ENCODE measurements at regions of chr2 and their contacts with region 1.

Region 1: DNA sequence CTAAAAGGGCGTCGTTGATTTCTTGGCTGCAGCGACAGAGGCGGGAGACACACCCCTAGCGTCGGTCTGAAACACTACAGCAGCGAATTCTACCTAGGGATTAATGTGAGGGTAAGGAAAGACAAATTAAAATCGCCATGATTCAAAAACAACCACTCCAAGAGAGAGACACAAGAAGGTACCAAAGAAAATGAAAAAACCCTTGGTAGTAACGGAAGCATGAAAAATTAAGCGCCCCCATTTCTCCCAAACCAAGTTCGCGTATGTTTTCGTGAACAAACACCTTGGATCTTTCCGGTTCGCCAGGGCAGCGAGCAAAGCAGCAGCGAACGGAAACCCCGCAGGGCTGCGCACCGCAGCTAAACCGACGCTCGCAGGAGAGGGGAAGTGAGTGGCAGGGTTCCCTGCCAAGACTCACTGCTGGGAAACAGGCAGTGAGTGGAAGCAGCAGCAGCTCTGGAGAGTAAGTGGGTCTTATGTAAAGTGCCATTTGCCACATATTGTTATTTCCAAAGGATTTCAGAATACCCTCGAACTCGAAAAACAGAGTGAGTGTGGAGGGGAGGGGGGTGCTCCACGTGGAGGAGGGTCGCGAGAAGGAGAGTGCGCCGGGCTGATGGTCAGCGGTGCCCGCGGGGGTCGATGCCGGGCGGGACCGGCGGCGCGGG is 1.0 kb downstream of the PPP3R1 start:
- DNase-seq: peak; percentile 87
- H3K4me3 Mint-ChIP-seq: peak overlapping the region; percentile 99
- H3K27ac Mint-ChIP-seq: peak overlapping the region; percentile 96
- H3K4me1 Mint-ChIP-seq: peaks cover 18% of the 10 kb centered on the region
- H3K27me3 Mint-ChIP-seq: no peaks in the 10 kb centered on the region
- CTCF ChIP-seq: peak; percentile 45

Region 2: GRCh38 chr2:67561457-67561965 is 689.8 kb before region 1 on chr2:
- CTCF ChIA-PET with region 1: no interaction called
- POLR2A ChIA-PET with region 1: no interaction called
- intact Hi-C with region 1: loop called (anchors 10 kb)
- DNase-seq: peak; percentile 84
- H3K4me3 Mint-ChIP-seq: peak overlapping the region; percentile 46
- H3K27ac Mint-ChIP-seq: peak overlapping the region; percentile 97
- H3K4me1 Mint-ChIP-seq: peaks cover 39% of the 10 kb centered on the region
- H3K27me3 Mint-ChIP-seq: no peaks in the 10 kb centered on the region
- CTCF ChIP-seq: no peak

Region 3: GRCh38 chr2:68176657-68177056 is 74.7 kb before region 1 on chr2:
- CTCF ChIA-PET with region 1: interaction called, 3 read pairs
- POLR2A ChIA-PET with region 1: interaction called, 10 read pairs
- intact Hi-C with region 1: loop called (anchors 5 kb)
- DNase-seq: no peak
- H3K4me3 Mint-ChIP-seq: no peak overlapping the region
- H3K27ac Mint-ChIP-seq: no peak overlapping the region
- H3K4me1 Mint-ChIP-seq: peaks cover 6% of the 10 kb centered on the region
- H3K27me3 Mint-ChIP-seq: no peaks in the 10 kb centered on the region
- CTCF ChIP-seq: no peak

Region 4: GRCh38 chr2:68190991-68191731 is 60.2 kb before region 1 on chr2:
- CTCF ChIA-PET with region 1: interaction called, 3 read pairs
- POLR2A ChIA-PET with region 1: interaction called, 54 read pairs
- intact Hi-C with region 1: loop called (anchors 2 kb)
- DNase-seq: peak; percentile 82
- H3K4me3 Mint-ChIP-seq: no peak overlapping the region
- H3K27ac Mint-ChIP-seq: peak overlapping the region; percentile 81
- H3K4me1 Mint-ChIP-seq: peaks cover 43% of the 10 kb centered on the region
- H3K27me3 Mint-ChIP-seq: no peaks in the 10 kb centered on the region
- CTCF ChIP-seq: no peak

Region 5: DNA sequence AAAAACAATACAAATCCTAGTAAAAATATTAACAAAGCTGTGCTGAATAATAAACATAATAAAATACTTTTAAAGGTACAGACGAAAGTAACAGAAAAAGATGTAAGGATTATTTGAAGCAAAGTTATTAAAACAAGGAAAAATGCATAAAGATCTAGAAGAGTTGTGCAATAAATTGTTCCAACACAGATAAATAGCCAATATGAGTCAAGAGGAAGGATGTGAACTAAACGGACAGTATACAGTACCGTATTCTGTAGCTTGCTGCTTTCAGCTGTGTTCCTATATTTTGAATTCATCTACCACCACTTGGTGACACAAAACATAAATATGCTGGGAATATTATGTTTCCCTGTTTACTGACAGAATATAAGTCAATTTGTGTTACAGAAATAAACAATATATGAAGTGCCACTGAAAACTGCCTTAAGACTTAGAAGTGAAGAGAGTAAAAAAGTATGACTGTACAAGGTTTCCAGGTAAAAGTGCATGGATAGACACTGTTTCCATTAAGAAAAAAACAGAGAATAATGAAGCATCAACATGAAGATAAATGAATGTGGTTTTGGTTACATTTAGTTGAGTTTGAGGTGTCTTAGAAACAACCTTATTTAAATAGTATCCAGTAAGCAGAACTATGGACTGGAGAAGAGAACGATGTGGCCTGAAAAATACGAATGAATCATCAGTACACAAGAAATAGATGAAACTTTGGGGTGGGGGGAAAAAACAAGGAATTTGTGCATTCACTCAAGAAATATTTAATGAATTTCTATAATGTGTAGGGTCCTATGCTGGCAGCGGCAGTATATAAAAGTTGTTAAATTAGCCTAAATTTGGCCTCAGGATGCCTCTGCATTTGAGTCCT is 12.1 kb before region 1 on chr2:
- CTCF ChIA-PET with region 1: interaction called, 3 read pairs
- POLR2A ChIA-PET with region 1: interaction called, 50 read pairs
- intact Hi-C with region 1: no loop called
- DNase-seq: peak; percentile 30
- H3K4me3 Mint-ChIP-seq: peak overlapping the region; percentile 54
- H3K27ac Mint-ChIP-seq: peak overlapping the region; percentile 88
- H3K4me1 Mint-ChIP-seq: peaks cover 38% of the 10 kb centered on the region
- H3K27me3 Mint-ChIP-seq: no peaks in the 10 kb centered on the region
- CTCF ChIP-seq: no peak

Region 6: DNA sequence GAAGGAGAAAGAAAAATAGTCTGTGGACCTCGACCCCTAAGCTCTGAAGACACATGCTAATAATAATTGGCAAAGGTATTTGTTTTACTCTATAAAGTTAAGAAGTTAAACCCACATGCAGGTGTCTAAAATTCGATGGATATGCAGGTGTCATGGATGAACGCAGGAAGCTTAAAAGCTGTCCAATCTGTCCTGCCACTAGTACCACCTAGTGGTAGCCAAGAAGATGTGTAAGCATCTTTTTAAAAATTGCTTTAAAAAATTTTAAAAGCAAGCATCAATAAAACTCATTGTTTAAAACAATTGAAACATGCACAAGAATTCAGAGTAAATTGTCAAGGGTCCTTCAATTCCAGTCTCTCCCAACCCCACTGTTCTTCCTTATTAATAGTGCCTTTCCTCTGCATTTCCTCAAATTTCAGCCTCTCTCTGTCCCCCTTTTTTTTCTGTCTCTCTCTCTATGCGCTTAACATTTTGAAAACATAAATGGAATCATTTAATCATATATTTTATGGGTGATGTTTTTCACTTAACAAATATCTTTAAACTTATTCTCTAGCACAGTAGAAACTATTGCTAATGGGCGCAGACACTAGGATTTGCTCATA is 31.6 kb after region 1 on chr2:
- CTCF ChIA-PET with region 1: interaction called, 30 read pairs
- POLR2A ChIA-PET with region 1: interaction called, 308 read pairs
- intact Hi-C with region 1: loop called (anchors 5 kb)
- DNase-seq: peak; percentile 60
- H3K4me3 Mint-ChIP-seq: no peak overlapping the region
- H3K27ac Mint-ChIP-seq: no peak overlapping the region
- H3K4me1 Mint-ChIP-seq: peaks cover 29% of the 10 kb centered on the region
- H3K27me3 Mint-ChIP-seq: no peaks in the 10 kb centered on the region
- CTCF ChIP-seq: peak; percentile 76

Region 7: DNA sequence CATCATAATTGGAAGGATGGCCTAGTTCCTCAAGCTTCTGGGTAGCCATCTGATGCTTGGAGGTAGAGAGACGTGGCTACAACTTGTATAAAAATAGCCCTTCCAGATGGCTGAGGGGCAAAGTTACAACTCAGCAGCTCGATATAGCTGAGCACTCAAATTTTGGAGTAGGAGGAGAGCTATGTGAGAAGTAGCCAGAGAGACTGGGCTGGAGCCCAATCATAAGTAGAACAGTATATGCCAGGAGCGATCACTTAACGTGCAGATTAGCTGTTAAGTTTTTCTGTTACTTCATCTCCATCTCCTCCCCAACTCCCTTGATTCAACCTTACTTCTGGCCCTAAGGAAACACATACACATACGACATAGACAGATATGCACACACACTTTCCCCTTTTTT is 39.6 kb after region 1 on chr2:
- CTCF ChIA-PET with region 1: interaction called, 11 read pairs
- POLR2A ChIA-PET with region 1: interaction called, 308 read pairs
- intact Hi-C with region 1: loop called (anchors 5 kb)
- DNase-seq: no peak
- H3K4me3 Mint-ChIP-seq: no peak overlapping the region
- H3K27ac Mint-ChIP-seq: no peak overlapping the region
- H3K4me1 Mint-ChIP-seq: peaks cover 10% of the 10 kb centered on the region
- H3K27me3 Mint-ChIP-seq: no peaks in the 10 kb centered on the region
- CTCF ChIP-seq: no peak

Measured in MCF 10A (cell line).